ENCODE measurements at regions of chr11 and their contacts with region 1.

Region 1: DNA sequence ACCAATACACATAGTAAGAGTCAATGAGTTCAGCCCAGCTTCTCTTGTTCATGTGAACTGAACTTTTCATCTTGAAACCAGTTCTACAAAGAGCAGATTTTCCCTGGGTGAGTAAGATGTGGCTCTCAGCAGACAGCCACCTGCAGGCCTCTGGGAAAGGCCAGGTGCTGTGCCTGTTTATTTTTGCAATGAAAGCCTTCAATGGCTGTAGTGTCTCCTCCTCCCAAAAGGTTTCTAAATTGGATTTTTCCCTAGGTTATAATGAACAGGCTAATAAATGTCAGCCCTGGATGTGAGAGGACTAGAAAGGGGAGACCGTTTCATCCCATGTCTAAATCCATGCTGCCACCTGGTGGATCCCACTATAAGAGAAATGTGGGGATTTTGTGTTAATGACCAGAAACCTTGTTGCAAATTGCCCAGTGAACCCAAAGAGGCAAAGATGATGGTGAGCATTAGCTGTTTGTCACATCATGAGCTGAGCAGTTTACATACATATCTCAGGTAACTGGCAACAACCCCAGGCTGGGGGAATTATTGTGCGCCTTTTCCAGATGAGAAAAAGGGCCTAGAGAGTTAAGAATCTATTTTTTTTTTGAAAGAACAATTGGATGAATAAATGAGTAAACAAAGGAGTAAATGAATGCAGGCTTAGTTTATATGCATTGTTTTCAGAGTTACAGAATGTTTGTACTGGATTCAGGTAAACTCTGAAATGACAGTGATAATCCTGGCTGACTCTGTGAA is 12.7 kb downstream of the C11orf91 start:
- DNase-seq: peak in 2 of 4 donors; percentile 42 to 66
- ATAC-seq: peak; percentile 25
- H3K4me3 ChIP-seq: no peak overlapping the region
- H3K27ac ChIP-seq: no peak overlapping the region
- H3K4me1 ChIP-seq: peaks cover 16 to 42% of the 10 kb centered on the region in 2 donors
- H3K27me3 ChIP-seq: no peaks in the 10 kb centered on the region
- CTCF ChIP-seq: peak; percentile 41 to 55

Region 2: DNA sequence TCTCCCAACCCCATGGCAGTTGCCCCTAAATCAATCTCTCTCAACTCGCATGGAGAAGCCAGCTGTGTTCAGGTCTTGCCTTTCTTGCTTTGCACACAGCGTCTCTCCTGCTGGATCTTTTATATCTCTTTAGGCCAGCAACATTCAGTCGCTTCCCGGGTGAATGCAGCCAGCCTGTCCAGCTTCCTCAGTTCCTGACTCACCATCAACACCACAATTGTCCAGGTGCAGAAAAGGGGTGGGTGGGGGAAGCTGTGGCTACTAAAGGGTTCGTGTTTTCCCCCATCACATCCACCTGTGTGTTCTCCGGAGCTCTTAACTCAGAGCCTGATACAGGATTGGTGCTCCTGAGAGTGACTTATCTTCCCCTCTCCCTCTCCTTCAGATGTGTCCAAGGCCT is 314.3 kb before region 1 on chr11:
- intact Hi-C with region 1: loop called in 1 of 2 experiments (anchors 5 kb)
- DNase-seq: no peak
- ATAC-seq: no peak
- H3K4me3 ChIP-seq: no peak overlapping the region
- H3K27ac ChIP-seq: no peak overlapping the region
- H3K4me1 ChIP-seq: peaks cover 0 to 17% of the 10 kb centered on the region in 2 donors
- H3K27me3 ChIP-seq: peaks cover 21 to 63% of the 10 kb centered on the region in 2 donors
- CTCF ChIP-seq: no peak

Region 3: GRCh38 chr11:33598426-33599069 is 89.4 kb before region 1 on chr11:
- intact Hi-C with region 1: no loop called
- DNase-seq: no peak
- ATAC-seq: no peak
- H3K4me3 ChIP-seq: no peak overlapping the region
- H3K27ac ChIP-seq: no peak overlapping the region
- H3K4me1 ChIP-seq: no peaks in the 10 kb centered on the region
- H3K27me3 ChIP-seq: peaks cover 0 to 38% of the 10 kb centered on the region in 2 donors
- CTCF ChIP-seq: no peak

Measured in left lung (tissue), 14 donors.